ENCODE measurements at regions of chr6 and their contacts with region 1.

Region 1: DNA sequence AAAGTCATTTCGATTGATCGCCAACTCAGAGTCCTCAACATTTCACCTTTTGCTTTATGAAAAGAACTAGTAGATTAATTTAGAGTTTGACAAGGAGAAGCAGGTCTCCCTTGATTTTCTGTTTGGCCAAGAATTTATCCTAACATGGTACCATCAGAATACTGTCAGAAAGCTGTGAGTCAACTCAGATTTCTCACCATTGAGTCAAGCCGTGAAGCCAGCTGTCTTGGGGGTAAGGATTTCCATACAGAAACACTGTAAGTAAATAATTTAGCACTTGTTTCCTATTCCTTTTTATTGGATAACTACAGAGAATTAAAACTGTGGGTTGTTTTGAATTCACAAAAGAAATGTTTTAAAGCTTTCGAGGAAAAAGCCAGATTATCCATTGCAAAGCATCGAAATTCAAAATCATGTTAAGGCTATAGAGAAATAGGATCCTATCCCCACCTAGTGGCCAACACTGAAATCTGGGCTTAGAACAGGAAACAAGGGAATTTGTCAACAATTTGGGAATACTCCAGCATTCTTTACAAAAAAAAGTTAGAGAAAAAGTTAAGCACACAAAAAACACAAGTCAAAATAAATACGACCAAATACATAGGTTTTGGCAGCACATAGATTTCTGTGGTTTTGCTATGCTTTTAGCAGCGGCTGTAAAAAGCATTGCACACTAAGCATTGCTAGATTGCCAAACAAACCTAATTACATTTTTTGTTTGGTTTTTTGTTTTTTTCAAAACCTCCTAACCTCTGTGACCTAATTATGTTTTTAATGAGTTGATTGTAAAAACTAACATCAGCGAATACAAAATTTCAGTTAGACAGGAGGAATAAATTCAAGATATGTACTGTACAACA is 44.2 kb downstream of the COL11A2 start:
- DNase-seq: no peak
- ATAC-seq: no peak
- H3K4me3 Mint-ChIP-seq: no peak overlapping the region
- H3K27ac Mint-ChIP-seq: no peak overlapping the region
- H3K4me1 Mint-ChIP-seq: peaks cover 7% of the 10 kb centered on the region
- H3K27me3 Mint-ChIP-seq: peaks cover 20% of the 10 kb centered on the region

Region 2: DNA sequence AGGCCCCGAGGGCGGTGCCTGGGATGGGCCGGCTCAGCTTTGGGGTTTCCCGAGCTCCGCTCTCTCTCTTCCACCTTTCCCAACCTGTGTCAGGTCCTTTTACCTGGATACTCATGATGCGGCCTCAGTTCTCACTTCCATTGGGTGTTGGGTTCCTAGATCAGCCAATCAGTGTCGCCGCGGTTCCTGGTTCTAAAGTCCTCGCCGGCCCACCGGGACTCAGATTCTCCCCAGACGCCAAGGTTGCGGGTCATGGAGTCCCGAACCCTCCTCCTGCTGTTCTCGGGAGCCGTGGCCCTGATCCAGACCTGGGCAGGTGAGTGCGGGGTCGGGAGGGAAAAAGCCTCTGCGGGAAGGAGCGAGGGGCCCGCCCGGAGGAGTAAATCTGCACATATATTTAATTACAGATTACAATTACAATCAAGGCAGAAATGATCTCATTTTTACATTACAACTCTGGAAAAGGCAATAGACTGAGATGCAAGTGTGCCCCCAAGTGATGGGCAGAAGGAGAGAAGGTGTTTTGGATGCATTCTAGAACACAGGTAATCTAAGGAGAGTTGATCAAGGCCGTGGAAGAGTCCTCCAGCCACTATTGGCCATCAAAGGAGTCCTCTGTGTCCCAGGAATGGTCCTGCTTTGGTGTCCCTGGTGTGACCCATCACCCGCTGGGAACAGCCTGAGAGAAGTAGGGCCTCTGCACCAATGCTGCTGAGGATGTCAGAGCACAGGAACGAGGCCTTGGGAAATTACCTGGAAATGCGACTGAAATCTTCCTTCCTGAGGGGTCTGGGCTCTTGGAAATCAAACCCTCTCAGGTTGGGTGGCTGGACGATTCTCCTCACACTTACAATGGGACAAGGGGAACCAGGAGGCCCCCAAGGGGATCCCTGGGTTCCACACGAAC is 1684.8 kb before region 1 on chr6:
- CTCF ChIA-PET with region 1: no interaction called
- POLR2A ChIA-PET with region 1: no interaction called
- DNase-seq: peak; percentile 90
- ATAC-seq: peak; percentile 89
- H3K4me3 Mint-ChIP-seq: peak overlapping the region; percentile 98
- H3K27ac Mint-ChIP-seq: peak overlapping the region; percentile 90
- H3K4me1 Mint-ChIP-seq: peaks cover 53% of the 10 kb centered on the region
- H3K27me3 Mint-ChIP-seq: peaks cover 6% of the 10 kb centered on the region

Region 3: DNA sequence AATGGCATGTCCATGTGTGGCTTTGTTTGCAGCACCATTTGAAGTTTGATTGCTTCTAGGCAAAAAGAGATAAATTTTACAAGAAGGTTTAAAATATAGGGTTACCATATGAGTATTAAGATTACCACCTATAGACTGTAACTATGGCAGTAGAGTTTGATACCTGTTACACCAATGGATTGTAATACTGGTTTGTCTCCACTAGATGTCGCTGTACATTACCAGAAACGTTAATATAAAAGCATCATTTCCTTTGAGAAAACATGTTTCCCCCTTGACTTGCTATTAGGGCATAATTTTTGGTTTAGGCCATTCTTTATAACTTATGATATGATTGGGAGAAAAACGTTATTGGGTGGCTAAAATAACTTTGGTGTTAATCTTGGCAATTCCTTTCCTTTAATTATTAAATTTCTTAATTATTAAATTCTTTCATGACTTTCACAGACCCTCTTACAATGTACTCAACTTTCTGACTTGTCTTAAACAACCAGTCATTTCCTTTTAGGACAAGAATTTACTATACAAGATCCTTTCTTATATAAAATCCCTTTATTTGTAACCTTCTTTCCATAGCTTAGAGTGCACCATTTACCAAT is 29.4 kb before region 1 on chr6:
- CTCF ChIA-PET with region 1: interaction called, 86 read pairs
- POLR2A ChIA-PET with region 1: no interaction called
- DNase-seq: peak; percentile 51
- ATAC-seq: peak; percentile 61
- H3K4me3 Mint-ChIP-seq: no peak overlapping the region
- H3K27ac Mint-ChIP-seq: no peak overlapping the region
- H3K4me1 Mint-ChIP-seq: peaks cover 17% of the 10 kb centered on the region
- H3K27me3 Mint-ChIP-seq: peaks cover 52% of the 10 kb centered on the region

Region 4: GRCh38 chr6:33136310-33136900 is 11.6 kb before region 1 on chr6:
- CTCF ChIA-PET with region 1: interaction called, 13 read pairs
- POLR2A ChIA-PET with region 1: no interaction called
- DNase-seq: no peak
- ATAC-seq: no peak
- H3K4me3 Mint-ChIP-seq: no peak overlapping the region
- H3K27ac Mint-ChIP-seq: no peak overlapping the region
- H3K4me1 Mint-ChIP-seq: no peaks in the 10 kb centered on the region
- H3K27me3 Mint-ChIP-seq: peaks cover 30% of the 10 kb centered on the region

Region 5: DNA sequence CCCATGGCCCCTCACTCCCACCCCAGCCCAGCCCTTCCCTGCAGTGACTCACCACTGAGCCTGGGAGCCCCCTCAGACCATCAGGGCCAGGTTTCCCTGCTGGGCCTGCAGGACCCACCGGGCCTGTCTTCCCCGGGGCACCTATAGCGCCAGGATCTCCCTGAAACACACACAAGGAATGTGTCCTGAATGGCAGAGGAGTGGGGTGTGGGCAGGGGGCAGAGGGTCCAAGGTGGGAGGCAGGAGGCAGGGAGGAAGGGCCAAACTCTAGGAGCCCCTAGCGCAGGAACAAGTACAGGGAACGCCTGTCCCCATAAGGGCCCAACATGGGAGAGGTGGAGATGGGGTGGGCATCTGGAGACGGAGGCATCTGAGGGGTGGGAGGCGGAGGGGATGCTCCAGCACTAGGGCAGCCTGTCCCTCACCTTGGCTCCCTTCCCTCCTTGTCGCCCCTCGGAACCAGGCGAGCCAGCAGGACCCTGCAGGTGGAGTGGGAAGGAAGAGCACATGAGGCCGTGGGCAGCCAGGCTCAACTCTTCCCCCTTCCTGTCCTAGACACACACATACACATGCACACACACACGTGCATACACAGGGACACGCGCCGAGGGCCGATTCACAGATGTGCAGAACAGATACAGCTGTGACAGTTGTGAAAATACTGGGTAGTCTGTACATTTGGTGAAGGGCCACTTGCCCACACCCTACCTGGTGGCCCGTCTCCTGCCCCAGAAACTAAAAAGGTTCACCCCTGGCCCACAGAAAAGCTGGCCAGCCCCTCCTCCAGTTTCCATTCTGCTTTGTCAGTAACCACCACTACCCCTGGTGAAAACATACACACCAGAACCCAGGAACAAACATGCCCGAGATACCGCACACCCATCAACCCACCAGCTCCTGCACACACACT is 19.6 kb after region 1 on chr6:
- CTCF ChIA-PET with region 1: no interaction called
- POLR2A ChIA-PET with region 1: no interaction called
- DNase-seq: no peak
- ATAC-seq: no peak
- H3K4me3 Mint-ChIP-seq: no peak overlapping the region
- H3K27ac Mint-ChIP-seq: no peak overlapping the region
- H3K4me1 Mint-ChIP-seq: no peaks in the 10 kb centered on the region
- H3K27me3 Mint-ChIP-seq: no peaks in the 10 kb centered on the region

Measured in activated CD8-positive, alpha-beta T cell treated with anti-CD3 and anti-CD28 coated beads, Interleukin-2, amount 10 ng/mL, durations not matched to agents 7 days and 5 days (primary cell).